Posterior cingulate gyrus (tissue), 11 donors: ENCODE measurements at regions of chr1 and their contacts with region 1.

Region 1: DNA sequence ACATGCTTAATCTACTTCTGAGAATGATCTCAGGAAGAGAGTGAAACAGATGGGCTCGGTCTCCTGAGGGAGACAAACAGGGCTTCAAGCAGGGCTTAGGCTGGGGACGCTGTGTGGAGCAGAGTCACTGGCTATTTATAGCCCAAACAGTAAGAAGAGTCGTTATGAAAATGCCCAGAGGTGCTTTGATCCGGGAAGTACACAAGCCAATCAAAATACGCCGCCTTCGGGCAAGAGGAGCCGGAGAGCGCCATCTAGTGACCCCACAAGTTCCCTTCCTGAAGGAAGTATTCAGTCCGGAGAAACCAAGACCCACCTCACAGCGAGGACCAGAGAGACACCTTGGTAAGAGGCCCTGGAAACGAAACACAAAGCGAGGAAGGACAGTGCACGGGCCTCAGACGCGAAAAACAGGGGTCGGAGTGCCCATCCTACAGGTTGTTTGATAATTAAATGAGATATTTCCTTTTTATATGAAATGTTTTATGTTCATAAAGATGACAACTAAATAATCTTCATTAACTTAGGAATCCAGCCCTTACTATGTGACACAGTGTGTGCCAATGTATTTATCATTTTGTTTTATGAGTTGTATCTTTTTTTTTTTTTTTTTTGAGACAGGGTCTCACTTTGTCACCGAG is 25.0 kb upstream of the SCCPDH start:
- DNase-seq: peak; percentile 51 to 96 (median 78)

Region 2: GRCh38 chr1:246497331-246497915 is 201.8 kb before region 1 on chr1:
- intact Hi-C with region 1: loop called (anchors 5 kb)
- DNase-seq: no peak

Region 3: GRCh38 chr1:246566128-246566812 is 132.9 kb before region 1 on chr1 and contains the starts of genes CNST and TFB2M:
- intact Hi-C with region 1: loop called (anchors 10 kb)
- DNase-seq: peak; percentile 95 to 99 (median 96)

Region 4: DNA sequence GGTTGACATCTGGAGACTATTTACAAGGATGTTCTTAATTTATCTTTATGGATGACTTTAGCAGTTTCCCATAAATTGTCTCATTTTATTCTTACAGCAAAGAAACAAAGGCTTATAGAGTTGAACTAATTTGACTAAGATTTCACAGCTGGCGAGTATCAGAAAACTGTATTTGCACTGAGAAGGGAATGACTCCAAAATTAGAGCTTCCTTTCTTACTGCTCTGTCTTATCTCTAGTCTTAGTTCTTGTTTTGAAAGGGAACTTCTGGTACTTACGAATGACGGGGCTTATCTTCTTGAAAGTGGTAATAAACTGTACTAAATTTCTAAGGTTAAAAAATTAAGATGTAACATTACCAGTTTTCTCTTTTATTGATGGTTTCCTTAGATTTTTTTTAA is 119.4 kb before region 1 on chr1:
- intact Hi-C with region 1: no loop called
- DNase-seq: no peak

Region 5: DNA sequence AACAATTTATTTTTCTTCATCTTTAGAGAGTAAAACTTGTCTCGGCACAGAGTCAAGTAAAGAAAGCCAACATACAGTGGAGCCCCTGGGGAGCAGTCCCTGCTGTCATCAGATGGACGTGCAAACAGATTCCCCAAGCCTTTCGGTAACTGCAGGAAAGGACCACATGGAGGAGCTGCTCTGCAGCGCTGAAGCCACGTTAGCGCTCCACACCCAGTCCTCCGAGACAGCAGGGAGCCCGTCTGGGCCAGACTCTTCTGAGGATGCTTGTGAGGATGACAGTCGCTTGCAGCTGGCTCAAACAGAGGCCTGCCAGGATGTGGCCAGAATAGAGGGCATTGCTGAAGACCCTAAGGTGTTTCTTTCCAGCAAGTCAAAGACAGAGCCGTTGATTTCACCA is 52.1 kb before region 1 on chr1:
- intact Hi-C with region 1: loop called (anchors 2 kb)
- DNase-seq: peak; percentile 45 to 97 (median 74)